Heart left ventricle (tissue), 16 donors: ENCODE measurements at regions of chrX and their contacts with region 1.

Region 1: DNA sequence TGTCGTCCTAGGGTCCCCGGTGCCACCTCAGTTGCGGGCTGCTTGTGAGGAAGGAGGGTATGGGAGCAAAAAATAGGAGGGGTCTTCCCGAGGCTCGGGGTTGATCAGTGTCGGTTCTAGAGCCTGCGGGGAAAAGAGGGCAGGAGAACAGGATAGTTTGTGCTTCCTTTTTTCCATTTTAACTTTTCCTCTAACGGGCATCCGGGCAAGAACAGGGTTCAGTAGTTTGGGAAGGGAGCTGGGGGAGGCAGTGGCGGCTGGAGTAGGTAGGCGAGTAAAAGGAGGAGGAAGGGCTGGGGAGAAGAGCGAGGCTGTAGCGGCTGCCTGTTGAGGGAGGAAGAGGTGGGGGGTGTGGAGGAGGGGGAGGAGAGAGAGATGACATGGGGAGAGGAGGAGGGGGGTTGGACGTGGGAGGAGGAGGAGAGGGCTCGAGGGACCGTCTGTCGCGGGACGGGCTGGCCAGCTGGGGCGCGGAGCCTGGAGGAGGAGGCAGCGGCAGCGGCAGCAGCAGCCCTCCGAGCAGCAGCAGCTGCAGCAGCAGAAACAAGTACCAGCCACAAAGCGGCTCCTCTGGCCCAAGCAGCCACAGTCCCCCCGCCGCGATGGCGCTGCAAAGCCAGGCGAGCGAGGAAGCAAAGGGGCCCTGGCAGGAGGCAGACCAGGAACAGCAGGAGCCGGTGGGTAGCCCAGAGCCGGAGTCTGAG is at the start of gene SLC16A2:
- DNase-seq: peak; percentile 76 to 85 (median 81)
- ATAC-seq: peak; percentile 74 to 82 (median 78)
- H3K4me3 ChIP-seq: peak within 1 kb of the TSS; percentile 31 to 78 (median 60)
- H3K27ac ChIP-seq: peak within 1 kb of the TSS; percentile 76 to 97 (median 90)
- H3K4me1 ChIP-seq: peaks cover 0 to 8% (median 0%) of the 10 kb centered on the region in 12 donors
- H3K27me3 ChIP-seq: peaks cover 0 to 55% (median 0%) of the 10 kb centered on the region in 9 donors
- CTCF ChIP-seq: no peak
- POLR2A ChIP-seq: peak in 1 of 2 donors; percentile 25
- total RNA-seq, gene SLC16A2: 4.7 to 12.1 (median 7.2) TPM

Region 2: DNA sequence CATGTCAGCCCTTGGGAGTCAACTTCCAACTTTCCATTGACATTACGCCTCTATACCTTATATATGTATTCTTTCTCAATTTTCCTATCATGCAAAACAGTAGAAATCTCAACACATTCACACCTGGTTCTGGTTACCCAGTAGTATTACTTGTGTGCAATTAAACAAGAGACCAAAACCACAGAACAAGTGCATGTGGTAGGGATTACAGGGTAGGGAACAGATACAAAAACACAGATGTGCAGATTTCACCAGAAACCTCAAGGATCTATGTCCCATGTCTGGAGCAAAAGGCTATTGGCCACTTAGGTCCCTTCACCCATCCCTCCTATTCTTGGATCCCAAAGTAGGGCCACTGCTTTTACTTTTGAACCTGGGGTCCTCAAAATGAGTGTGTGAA is 260.8 kb before region 1 on chrX:
- intact Hi-C with region 1: no loop called
- DNase-seq: no peak
- ATAC-seq: no peak
- H3K4me3 ChIP-seq: no peak overlapping the region
- H3K27ac ChIP-seq: no peak overlapping the region
- H3K4me1 ChIP-seq: no peaks in the 10 kb centered on the region
- H3K27me3 ChIP-seq: no peaks in the 10 kb centered on the region
- CTCF ChIP-seq: no peak
- POLR2A ChIP-seq: no peak

Region 3: DNA sequence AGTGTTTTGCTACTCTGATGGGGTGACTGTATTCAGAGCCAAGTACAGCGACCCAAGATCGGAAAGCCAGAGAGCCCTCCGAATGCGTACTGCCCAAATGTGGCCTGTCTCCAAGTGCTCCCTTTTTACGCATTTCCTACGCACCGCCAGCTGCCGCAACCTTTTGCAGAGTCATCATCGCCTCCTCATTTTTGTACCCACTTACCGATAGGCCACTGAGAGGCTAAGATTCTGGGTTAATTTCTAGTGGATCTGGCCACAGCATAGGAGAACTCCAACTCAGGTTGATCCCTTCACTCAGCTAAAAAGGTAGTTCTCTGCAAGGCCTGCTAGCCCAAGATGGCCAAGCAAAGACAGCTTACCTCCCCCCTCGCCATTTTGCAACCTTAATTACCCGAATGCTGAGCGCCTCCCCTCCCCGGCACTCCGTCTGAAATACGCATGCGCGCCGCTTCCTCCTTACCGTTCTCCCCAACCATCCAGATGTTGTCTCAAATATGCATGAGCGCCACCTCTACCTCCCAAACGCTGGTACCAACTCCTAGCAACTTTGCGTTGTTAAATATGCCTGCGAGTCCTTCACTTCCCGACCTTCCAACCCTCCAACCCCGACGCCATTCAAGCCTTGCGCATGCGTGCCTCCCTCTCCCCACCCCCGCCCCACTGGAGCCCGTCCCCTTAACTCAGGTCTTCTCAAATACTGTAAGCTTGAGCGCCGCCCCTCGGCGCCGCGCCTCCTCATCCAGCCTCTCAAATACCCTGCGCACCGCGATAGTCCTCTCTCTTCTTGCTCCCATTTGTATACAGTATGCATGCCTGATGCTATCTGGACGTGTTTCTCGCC is 129.0 kb before region 1 on chrX:
- intact Hi-C with region 1: loop called in 1 of 10 experiments (anchors 5 kb)
- DNase-seq: peak; percentile 85 to 93 (median 89)
- ATAC-seq: peak; percentile 94 to 96 (median 95)
- H3K4me3 ChIP-seq: peak overlapping the region; percentile 45 to 84 (median 68)
- H3K27ac ChIP-seq: peak overlapping the region; percentile 78 to 94 (median 91)
- H3K4me1 ChIP-seq: peaks cover 0 to 25% (median 10%) of the 10 kb centered on the region in 12 donors
- H3K27me3 ChIP-seq: peaks cover 0 to 5% (median 0%) of the 10 kb centered on the region in 9 donors
- CTCF ChIP-seq: peak in 6 of 12 donors; percentile 13 to 50 (median 22)
- POLR2A ChIP-seq: peak in 1 of 2 donors; percentile 61